Left lung (tissue), 14 donors: ENCODE measurements at regions of chr14 and their contacts with region 1.

Region 1: DNA sequence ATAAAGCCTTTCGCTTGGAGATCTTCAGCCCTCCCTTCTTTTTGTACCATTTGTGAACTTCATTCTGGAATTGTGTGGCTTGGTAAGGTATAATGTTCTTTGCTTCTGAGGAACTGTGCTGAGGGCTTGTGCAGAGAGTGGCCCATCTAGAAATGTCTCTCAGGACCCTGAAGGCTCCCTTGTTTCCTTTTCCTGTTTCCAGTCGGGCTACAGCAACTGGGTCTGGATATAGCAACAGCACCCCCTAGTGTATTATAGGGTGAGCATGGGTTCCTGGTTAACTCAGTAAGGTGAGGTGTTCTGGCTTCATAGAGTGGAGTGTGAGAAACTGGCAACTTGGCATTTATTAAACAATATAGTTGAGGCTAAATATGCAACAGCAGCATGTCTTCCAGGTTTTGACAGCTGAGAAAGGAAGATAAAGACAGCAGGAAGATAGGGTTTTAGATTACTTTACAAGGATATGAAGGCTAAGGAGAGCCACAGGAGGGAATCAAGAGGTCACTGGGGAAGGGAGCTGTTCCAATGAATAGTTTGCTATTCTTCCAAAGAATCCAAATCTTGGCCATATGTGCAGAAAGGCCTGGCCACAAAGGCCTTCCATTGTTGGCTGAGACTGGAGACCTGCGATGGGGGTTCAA is 49.1 kb upstream of the RNU6-8 start:
- DNase-seq: peak in 2 of 4 donors; percentile 41 to 78
- ATAC-seq: peak; percentile 94
- H3K4me3 ChIP-seq: no peak overlapping the region
- H3K27ac ChIP-seq: no peak overlapping the region
- H3K4me1 ChIP-seq: peaks cover 0 to 5% of the 10 kb centered on the region in 2 donors
- H3K27me3 ChIP-seq: no peaks in the 10 kb centered on the region
- CTCF ChIP-seq: peak; percentile 74 to 79

Region 2: GRCh38 chr14:31510222-31510621 is 741.9 kb before region 1 on chr14:
- intact Hi-C with region 1: loop called in 1 of 2 experiments (anchors 5 kb)
- DNase-seq: peak in 2 of 4 donors; percentile 7 to 11
- ATAC-seq: peak; percentile 25
- H3K4me3 ChIP-seq: no peak overlapping the region
- H3K27ac ChIP-seq: no peak overlapping the region
- H3K4me1 ChIP-seq: no peaks in the 10 kb centered on the region
- H3K27me3 ChIP-seq: no peaks in the 10 kb centered on the region
- CTCF ChIP-seq: peak in 1 of 2 donors; percentile 60

Region 3: GRCh38 chr14:32073537-32074189 is 178.5 kb before region 1 on chr14:
- intact Hi-C with region 1: loop called in 1 of 2 experiments (anchors 5 kb)
- DNase-seq: peak in 2 of 4 donors; percentile 42 to 77
- ATAC-seq: no peak
- H3K4me3 ChIP-seq: no peak overlapping the region
- H3K27ac ChIP-seq: no peak overlapping the region
- H3K4me1 ChIP-seq: peaks cover 0 to 10% of the 10 kb centered on the region in 2 donors
- H3K27me3 ChIP-seq: no peaks in the 10 kb centered on the region
- CTCF ChIP-seq: peak; percentile 61 to 79